B cell (primary cell): ENCODE measurements at regions of chr10 and their contacts with region 1.

Region 1: GRCh38 chr10:95530029-95530428 is 31.1 kb downstream of the SORBS1 start:
- DNase-seq: no peak
- ATAC-seq: no peak
- H3K4me3 ChIP-seq: no peak overlapping the region
- H3K4me3 Mint-ChIP-seq: no peak overlapping the region
- H3K27ac ChIP-seq: no peak overlapping the region
- H3K27ac Mint-ChIP-seq: no peak overlapping the region
- H3K4me1 ChIP-seq: no peaks in the 10 kb centered on the region
- H3K4me1 Mint-ChIP-seq: no peaks in the 10 kb centered on the region
- H3K27me3 ChIP-seq: peaks cover 0 to 4% (median 1%) of the 10 kb centered on the region in 4 experiments
- H3K27me3 Mint-ChIP-seq: peaks cover 15% of the 10 kb centered on the region
- CTCF ChIP-seq: no peak

Region 2: GRCh38 chr10:95880704-95881103 is 350.7 kb after region 1 on chr10:
- CTCF ChIA-PET with region 1: no interaction called
- POLR2A ChIA-PET with region 1: interaction called, 10 read pairs
- intact Hi-C with region 1: no loop called
- DNase-seq: peak; percentile 30
- ATAC-seq: no peak
- H3K4me3 ChIP-seq: no peak overlapping the region
- H3K4me3 Mint-ChIP-seq: no peak overlapping the region
- H3K27ac ChIP-seq: peak overlapping the region in 1 of 2 donors; percentile 58
- H3K27ac Mint-ChIP-seq: peak overlapping the region; percentile 72
- H3K4me1 ChIP-seq: peaks cover 0 to 8% of the 10 kb centered on the region in 2 donors
- H3K4me1 Mint-ChIP-seq: peaks cover 3% of the 10 kb centered on the region
- H3K27me3 ChIP-seq: no peaks in the 10 kb centered on the region
- H3K27me3 Mint-ChIP-seq: no peaks in the 10 kb centered on the region
- CTCF ChIP-seq: no peak